A549 (cell line): ENCODE measurements at regions of chr1 and their contacts with region 1.

Region 1: DNA sequence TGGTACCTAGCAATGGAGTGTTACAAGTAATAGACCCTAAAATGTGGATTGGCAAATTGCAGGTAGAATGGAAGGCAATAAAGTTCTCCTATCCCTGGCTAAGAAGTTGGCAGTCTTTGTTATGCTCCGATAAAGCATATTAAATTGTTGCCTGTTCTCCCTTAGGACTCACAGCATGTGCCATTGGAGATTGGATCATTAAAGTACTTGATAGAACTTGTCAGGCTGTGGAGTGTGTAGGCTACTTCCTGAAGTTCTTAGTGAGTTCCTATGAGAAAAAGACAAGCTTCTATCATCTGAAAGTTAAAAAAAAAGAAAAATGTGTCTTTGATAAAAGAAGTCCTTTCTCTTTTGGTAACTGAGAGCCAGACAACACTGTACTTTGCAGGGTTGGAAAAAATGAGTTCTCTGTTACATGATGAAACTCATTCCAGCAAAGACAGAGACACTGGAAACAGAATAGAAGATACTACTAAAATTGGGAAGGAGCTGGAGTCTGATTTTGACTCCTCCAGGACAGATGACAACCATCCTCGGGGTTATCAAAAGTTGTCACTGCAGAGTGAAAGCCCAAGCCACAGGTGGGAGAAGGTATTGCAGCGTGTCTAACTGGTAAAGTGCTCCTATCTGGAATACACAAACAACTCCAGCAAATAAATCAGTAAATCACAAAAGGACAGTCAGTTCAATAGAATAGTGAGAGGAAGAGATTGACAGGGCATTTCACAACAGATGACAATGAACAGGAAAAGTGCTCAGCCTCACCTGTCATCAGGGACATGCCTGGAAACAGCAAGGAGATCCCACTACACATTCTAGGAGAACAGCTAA is 87.5 kb upstream of the WDR26 start:
- DNase-seq: no peak
- ATAC-seq: peak in 1 of 2 experiments; percentile 61; a peak in 3 of 6 replicates
- H3K4me3 ChIP-seq: no peak overlapping the region
- H3K27ac ChIP-seq: no peak overlapping the region
- H3K4me1 ChIP-seq: no peaks in the 10 kb centered on the region
- CTCF ChIP-seq: no peak
- EP300 ChIP-seq: no peak
- POLR2A ChIP-seq: no peak
- RAD21 ChIP-seq: no peak

Region 2: DNA sequence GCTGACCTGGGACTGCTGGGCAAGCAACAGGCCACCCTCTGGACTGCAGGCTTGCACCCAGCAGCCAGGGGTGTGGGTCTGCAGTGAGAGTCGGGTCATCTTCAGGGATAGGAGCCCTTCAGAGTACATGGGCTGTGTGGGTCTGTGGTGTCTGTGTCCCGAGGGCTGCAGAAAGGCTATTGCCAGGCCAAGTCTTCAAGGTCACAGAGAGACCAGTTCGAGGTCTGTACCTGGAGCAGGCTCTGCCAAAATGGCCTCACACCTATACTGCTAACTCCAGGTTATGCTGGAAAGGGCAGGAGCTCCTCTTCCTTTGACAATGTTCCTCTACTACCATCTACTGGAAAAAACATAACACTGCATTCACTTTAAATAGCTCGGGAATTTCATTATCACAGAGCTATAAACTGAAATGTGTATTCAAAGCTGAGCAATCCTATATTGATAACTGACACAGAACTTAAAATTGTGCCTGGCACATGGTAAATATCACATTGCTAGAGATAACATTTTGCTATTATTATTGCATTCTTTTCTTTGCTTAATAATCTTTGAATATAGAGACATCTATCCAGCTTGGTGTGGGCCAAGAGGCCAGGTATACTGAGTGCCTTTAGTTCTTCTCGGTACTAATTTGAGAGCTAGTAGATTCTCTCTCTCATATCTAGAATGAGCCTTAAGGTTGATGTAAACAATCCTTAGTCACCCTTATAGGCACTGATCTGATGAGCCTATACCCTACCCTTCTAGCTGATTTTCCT is 400.5 kb after region 1 on chr1:
- CTCF ChIA-PET with region 1: interaction called, 121 read pairs
- POLR2A ChIA-PET with region 1: no interaction called
- DNase-seq: peak; percentile 48 to 57
- ATAC-seq: peak; percentile 92 to 93
- H3K4me3 ChIP-seq: no peak overlapping the region
- H3K27ac ChIP-seq: no peak overlapping the region
- H3K4me1 ChIP-seq: no peaks in the 10 kb centered on the region
- CTCF ChIP-seq: peak; percentile 78
- EP300 ChIP-seq: no peak
- POLR2A ChIP-seq: no peak
- RAD21 ChIP-seq: peak; percentile 79 to 86